CD4-positive, alpha-beta memory T cell (primary cell): ENCODE measurements at regions of chr11 and their contacts with region 1.

Region 1: DNA sequence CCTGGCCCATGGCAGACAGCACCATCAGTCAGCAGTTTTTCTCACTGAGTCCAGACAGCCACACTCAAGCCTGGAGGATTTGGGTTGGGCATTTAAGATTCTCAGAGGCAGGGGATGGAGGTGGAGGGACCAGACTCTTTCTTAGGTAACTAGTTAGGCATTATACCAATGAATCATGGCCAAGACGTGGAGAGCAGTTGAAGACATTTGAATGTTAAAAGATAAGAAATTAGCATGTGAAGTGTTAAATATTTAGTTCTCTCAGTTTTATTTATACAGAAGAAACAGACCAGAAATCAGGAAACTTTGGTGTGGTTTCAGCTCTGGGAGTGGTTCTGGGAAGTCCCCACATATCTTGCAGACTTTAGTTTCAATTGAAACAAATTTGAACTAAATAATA is 9.9 kb downstream of the GTF2H1 start:
- DNase-seq: peak; percentile 45 to 82 (median 57)
- H3K4me3 ChIP-seq: peak overlapping the region; percentile 11 to 19
- H3K4me3 Mint-ChIP-seq: peak overlapping the region; percentile 62 to 89 (median 79)
- H3K27ac ChIP-seq: peak overlapping the region; percentile 71
- H3K27ac Mint-ChIP-seq: peak overlapping the region; percentile 92 to 95 (median 94)
- H3K4me1 ChIP-seq: peaks cover 69% of the 10 kb centered on the region
- H3K4me1 Mint-ChIP-seq: peaks cover 43 to 69% (median 60%) of the 10 kb centered on the region in 4 donors
- H3K27me3 ChIP-seq: no peaks in the 10 kb centered on the region
- H3K27me3 Mint-ChIP-seq: no peaks in the 10 kb centered on the region

Region 2: GRCh38 chr11:18383388-18384156 is 51.3 kb after region 1 on chr11:
- CTCF ChIA-PET with region 1: interaction called, 9 read pairs
- POLR2A ChIA-PET with region 1: interaction called, 12 read pairs
- intact Hi-C with region 1: no loop called
- DNase-seq: peak; percentile 76 to 89 (median 81)
- H3K4me3 ChIP-seq: peak overlapping the region; percentile 29 to 32
- H3K4me3 Mint-ChIP-seq: peak overlapping the region; percentile 67 to 87 (median 82)
- H3K27ac ChIP-seq: peak overlapping the region; percentile 71
- H3K27ac Mint-ChIP-seq: peak overlapping the region; percentile 96 to 99 (median 98)
- H3K4me1 ChIP-seq: peaks cover 51% of the 10 kb centered on the region
- H3K4me1 Mint-ChIP-seq: peaks cover 30 to 51% (median 40%) of the 10 kb centered on the region in 4 donors
- H3K27me3 ChIP-seq: no peaks in the 10 kb centered on the region
- H3K27me3 Mint-ChIP-seq: no peaks in the 10 kb centered on the region